ENCODE measurements at regions of chr14 and their contacts with region 1.

Region 1: GRCh38 chr14:69606258-69607184 is 4.9 kb upstream of the SUSD6 start:
- DNase-seq: no peak

Region 2: DNA sequence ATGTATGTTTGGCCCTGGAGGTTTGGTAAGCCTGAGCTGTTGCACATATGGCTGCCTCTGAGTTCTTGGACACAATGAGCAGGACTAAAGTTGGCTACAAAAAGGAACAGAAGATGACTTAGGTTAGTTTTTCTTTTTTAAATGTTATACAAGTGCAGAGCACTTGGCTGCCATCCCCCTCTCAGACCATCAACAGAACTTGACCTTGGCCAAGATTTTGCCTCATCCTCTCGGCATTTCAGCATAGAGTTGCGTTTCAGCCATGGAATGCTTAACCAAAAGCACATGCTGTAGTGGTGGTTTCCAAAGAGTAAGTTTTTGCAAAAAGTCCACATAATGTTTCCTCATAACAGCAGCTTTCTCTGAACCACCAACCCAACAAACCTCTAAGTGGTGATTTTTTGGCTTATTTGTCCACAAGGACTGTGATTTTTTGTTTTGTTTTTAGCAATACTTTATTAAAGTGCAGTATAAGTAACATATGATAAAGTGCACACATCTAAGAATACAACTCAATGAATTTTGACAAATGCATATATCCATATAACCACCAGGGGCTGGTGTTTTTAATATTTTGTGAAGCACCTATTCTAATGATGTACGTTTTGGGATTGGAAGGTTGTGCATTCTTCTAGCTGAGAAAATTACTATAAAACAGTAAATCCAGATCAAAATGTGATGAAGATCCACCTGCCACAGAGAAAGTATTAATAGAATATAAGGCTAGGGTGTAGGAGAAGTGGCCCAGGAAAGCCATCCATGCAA is 358.7 kb before region 1 on chr14:
- in situ Hi-C with region 1: no loop called
- DNase-seq: no peak

Region 3: GRCh38 chr14:69715725-69716477 is 109.4 kb after region 1 on chr14:
- in situ Hi-C with region 1: loop called (anchors 10 kb)
- DNase-seq: no peak